Caco-2 (cell line): ENCODE measurements at regions of chr4 and their contacts with region 1.

Region 1: DNA sequence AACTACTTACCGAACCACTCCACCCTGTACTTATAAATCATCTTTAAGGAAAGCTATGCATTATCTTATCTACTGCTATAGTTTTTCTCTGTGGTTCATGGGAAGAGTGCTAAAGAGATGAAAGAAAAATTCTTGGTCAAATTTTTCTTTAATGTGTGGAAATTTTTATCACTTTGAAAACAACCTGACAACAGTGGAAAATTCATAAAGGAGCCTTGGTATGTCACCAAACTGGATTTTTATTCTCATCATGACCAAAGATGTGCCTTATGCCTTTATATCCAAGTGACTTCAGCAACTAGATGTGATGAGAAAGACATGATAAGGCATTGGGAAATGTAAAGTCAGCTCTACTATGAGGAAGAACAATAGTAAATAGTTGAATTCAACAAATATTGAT is 67.2 kb upstream of the SPP1 start:
- DNase-seq: peak in 1 of 2 experiments; percentile 33
- H3K4me3 ChIP-seq: no peak overlapping the region
- H3K4me3 Mint-ChIP-seq: no peak overlapping the region
- H3K27ac Mint-ChIP-seq: no peak overlapping the region
- H3K4me1 ChIP-seq: peaks cover 41% of the 10 kb centered on the region
- H3K4me1 Mint-ChIP-seq: peaks cover 26% of the 10 kb centered on the region
- H3K27me3 ChIP-seq: no peaks in the 10 kb centered on the region
- H3K27me3 Mint-ChIP-seq: no peaks in the 10 kb centered on the region
- CTCF ChIP-seq: no peak

Region 2: DNA sequence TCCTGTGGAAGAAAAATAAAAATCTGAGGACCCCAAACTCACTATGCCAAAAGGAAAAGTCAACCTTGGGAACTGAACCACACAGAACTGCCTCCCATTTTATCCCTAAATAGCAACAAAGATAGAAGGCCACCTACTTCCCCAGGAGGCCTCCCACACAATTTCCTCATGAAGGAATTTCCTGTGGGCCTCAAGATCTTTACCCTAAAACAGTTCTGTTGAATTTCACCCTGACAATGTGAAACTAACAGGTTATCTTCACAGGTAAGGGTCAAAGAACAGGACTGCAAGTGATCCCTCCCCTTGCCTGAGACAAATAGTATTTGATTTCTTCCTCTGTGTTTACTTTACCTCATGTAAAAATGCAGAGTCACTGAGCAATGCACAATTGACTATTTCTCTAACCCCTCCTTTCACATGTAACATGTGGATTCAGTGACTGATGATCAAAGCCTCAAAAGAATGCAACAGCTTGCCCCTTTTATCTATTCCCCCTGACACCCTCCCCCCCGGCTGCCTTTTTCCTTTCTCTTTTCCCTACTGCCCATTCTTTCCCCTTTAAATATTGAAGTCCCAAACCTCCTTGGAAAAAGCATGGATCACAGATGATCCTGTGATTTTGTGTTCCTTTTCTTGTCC is 42.3 kb before region 1 on chr4:
- CTCF ChIA-PET with region 1: no interaction called
- POLR2A ChIA-PET with region 1: no interaction called
- intact Hi-C with region 1: loop called (anchors 1 kb)
- DNase-seq: peak; percentile 40 to 63
- H3K4me3 ChIP-seq: no peak overlapping the region
- H3K4me3 Mint-ChIP-seq: peak overlapping the region; percentile 28
- H3K27ac Mint-ChIP-seq: peak overlapping the region; percentile 86
- H3K4me1 ChIP-seq: peaks cover 28% of the 10 kb centered on the region
- H3K4me1 Mint-ChIP-seq: peaks cover 20% of the 10 kb centered on the region
- H3K27me3 ChIP-seq: no peaks in the 10 kb centered on the region
- H3K27me3 Mint-ChIP-seq: no peaks in the 10 kb centered on the region
- CTCF ChIP-seq: no peak